Endothelial cell of umbilical vein (primary cell): ENCODE measurements at regions of chr4 and their contacts with region 1.

Region 1: DNA sequence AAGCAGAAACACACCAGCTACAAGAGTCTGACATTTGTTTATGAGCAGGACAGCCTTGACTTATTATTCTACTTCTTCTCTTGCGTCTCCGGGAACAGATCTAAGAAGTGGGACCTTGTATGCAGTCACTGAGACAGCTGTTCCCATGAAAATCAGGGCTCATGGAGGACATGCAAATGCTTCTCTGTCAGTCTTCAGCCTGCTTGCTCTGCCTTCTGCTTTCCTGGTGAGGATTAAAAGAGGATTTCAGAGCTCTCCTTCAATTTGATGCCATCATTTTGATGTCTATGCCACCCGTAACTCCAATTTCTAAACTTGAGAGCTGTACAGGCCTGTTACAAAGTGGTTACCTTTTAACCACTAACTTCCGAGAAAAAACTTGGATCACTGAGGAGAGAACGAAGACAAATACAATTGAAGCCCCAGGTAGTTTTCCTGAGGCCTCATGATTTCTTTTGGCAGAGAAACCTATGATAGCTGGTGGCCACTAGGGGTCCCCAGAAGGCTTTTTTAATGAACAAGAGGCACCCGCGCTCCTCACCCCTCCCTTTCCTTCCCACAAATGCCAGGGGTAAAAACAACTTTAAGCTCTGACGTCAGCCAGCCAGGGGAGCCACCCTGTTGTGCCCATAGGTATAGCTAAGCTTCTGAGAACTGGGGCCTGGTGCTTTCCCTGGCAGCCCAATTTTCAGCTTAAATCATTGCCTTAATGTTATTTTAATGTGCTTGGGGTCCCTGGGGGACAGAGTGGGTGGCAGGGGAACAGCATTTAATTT is 97.0 kb downstream of the DDIT4L start:
- DNase-seq: peak; percentile 89
- H3K4me3 ChIP-seq: no peak overlapping the region
- H3K27ac ChIP-seq: peak overlapping the region; percentile 53
- H3K4me1 ChIP-seq: peaks cover 3% of the 10 kb centered on the region
- H3K27me3 ChIP-seq: no peaks in the 10 kb centered on the region
- CTCF ChIP-seq: peak; percentile 76 to 85
- POLR2A ChIP-seq: no peak

Region 2: DNA sequence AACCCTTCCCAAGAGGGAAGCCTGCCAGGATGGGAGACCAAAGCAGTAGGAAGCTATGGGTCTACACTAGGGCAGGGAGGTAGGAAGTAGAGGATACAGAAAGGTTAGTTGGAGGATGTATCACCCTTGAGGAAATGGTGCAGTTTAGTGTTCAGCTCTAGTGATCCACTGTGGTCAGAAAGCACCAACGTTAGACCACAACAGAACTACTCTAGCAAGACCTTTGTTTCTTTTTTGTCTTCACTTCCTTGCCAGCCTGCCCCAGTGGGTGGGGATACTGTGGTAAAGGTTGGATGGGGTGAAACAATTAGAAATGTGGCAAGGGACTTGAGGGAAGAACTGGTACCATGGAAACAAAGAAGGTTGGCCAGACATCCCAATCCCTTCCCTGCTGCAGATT is 13.7 kb after region 1 on chr4:
- CTCF ChIA-PET with region 1: interaction called, 21 read pairs
- POLR2A ChIA-PET with region 1: no interaction called
- dilution Hi-C with region 1: no loop called
- intact Hi-C with region 1: no loop called
- DNase-seq: no peak
- H3K4me3 ChIP-seq: no peak overlapping the region
- H3K27ac ChIP-seq: no peak overlapping the region
- H3K4me1 ChIP-seq: no peaks in the 10 kb centered on the region
- H3K27me3 ChIP-seq: no peaks in the 10 kb centered on the region
- CTCF ChIP-seq: no peak
- POLR2A ChIP-seq: no peak

Region 3: GRCh38 chr4:100147198-100147597 is 53.9 kb after region 1 on chr4:
- CTCF ChIA-PET with region 1: no interaction called
- POLR2A ChIA-PET with region 1: no interaction called
- dilution Hi-C with region 1: no loop called
- intact Hi-C with region 1: no loop called
- DNase-seq: no peak
- H3K4me3 ChIP-seq: no peak overlapping the region
- H3K27ac ChIP-seq: no peak overlapping the region
- H3K4me1 ChIP-seq: no peaks in the 10 kb centered on the region
- H3K27me3 ChIP-seq: no peaks in the 10 kb centered on the region
- CTCF ChIP-seq: no peak
- POLR2A ChIP-seq: no peak

Region 4: GRCh38 chr4:100224721-100225120 is 131.4 kb after region 1 on chr4:
- CTCF ChIA-PET with region 1: no interaction called
- POLR2A ChIA-PET with region 1: no interaction called
- dilution Hi-C with region 1: no loop called
- intact Hi-C with region 1: no loop called
- DNase-seq: no peak
- H3K4me3 ChIP-seq: no peak overlapping the region
- H3K27ac ChIP-seq: no peak overlapping the region
- H3K4me1 ChIP-seq: no peaks in the 10 kb centered on the region
- H3K27me3 ChIP-seq: no peaks in the 10 kb centered on the region
- CTCF ChIP-seq: no peak
- POLR2A ChIP-seq: no peak

Region 5: GRCh38 chr4:100421361-100421978 is 328.2 kb after region 1 on chr4:
- CTCF ChIA-PET with region 1: interaction called, 6 read pairs
- POLR2A ChIA-PET with region 1: no interaction called
- dilution Hi-C with region 1: no loop called
- intact Hi-C with region 1: loop called (anchors 1 kb)
- DNase-seq: peak; percentile 73
- H3K4me3 ChIP-seq: no peak overlapping the region
- H3K27ac ChIP-seq: peak overlapping the region; percentile 43
- H3K4me1 ChIP-seq: peaks cover 18% of the 10 kb centered on the region
- H3K27me3 ChIP-seq: no peaks in the 10 kb centered on the region
- CTCF ChIP-seq: peak; percentile 30 to 44
- POLR2A ChIP-seq: no peak

Region 6: DNA sequence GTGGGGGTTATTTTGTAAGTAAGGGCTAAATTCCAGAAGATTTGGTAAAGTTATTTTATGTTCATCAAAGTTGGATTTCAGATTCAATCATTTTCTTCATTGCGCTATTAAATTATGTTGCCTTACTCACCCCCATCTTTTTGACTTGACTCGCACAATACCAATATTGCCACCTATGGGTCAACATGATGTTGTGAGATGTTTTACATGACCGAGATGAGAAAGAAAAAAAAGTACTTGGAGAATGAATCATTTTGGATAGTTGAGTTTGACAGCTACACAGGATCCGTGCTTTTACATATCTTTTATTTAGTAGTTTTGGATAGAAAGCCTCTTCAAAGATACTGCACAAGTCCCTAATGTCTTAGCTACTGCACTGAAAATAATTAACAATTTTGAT is 648.8 kb after region 1 on chr4:
- CTCF ChIA-PET with region 1: interaction called, 11 read pairs
- POLR2A ChIA-PET with region 1: no interaction called
- dilution Hi-C with region 1: no loop called
- intact Hi-C with region 1: loop called (anchors 1 kb)
- DNase-seq: peak; percentile 67
- H3K4me3 ChIP-seq: no peak overlapping the region
- H3K27ac ChIP-seq: no peak overlapping the region
- H3K4me1 ChIP-seq: peaks cover 18% of the 10 kb centered on the region
- H3K27me3 ChIP-seq: no peaks in the 10 kb centered on the region
- CTCF ChIP-seq: peak; percentile 45 to 49
- POLR2A ChIP-seq: no peak